AG04449 (cell line): ENCODE measurements at regions of chr15 and their contacts with region 1.

Region 1: DNA sequence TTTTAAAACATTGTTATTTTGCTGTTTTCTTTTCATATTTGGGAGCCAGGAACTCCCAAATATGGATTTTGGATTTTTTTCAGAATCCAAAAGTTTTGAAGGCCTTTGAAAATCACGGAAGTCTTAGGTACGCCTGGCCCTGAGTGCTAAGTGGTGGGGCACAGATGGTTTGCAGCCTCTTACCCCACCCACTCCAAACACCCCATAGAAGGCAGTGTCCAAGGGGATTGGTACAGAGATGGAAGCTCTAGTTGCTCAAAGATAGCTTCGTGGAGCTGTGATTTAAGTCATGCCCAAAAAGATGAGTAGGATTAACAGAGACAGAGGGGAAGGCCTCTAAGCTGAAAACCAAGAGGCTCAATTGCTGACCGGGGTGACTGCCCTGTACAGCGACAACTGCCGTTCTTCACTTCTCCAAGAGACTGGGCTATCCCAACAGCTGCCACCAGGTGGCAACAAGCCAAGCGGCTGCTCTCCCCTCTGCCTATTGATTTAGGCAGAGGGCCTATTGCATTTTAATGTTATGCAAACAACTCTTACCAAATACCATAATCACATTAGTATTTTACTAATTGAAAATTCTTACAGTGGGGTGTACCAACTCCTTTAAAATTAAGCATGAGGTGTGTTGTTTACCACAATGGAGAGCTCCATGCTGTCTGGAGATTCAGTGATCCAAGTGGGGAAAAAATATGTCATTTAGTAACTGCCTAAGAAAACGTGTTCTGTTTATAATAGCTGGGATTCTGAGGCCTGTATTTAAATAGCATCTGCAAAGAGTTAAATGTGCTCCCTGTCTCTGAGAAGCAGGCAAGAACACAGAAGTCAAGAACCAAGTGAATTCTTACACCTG is 64.0 kb upstream of the C15orf61 start:
- DNase-seq: no peak
- H3K4me3 ChIP-seq: no peak overlapping the region
- CTCF ChIP-seq: peak; percentile 83

Region 2: DNA sequence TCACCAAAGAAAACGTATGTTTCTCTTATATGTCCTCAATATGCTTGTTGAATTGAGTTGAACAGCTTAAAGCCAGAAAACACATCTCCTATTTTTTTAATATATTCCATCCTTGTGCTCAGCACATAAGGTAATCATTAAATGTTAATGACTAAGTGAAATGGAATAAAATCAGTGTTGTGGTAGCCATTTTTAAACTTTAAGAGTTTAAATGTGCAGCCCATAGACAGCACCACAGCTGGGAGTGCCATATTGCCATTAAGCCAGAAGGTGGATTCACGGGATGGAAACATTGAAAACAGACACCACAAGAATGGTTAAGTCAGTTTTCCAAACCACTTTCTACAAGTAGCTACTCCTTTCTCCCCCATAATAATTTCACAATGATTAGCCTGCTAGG is 12.8 kb before region 1 on chr15:
- CTCF ChIA-PET with region 1: interaction called, 74 read pairs
- POLR2A ChIA-PET with region 1: no interaction called
- DNase-seq: no peak
- H3K4me3 ChIP-seq: no peak overlapping the region
- CTCF ChIP-seq: no peak

Region 3: DNA sequence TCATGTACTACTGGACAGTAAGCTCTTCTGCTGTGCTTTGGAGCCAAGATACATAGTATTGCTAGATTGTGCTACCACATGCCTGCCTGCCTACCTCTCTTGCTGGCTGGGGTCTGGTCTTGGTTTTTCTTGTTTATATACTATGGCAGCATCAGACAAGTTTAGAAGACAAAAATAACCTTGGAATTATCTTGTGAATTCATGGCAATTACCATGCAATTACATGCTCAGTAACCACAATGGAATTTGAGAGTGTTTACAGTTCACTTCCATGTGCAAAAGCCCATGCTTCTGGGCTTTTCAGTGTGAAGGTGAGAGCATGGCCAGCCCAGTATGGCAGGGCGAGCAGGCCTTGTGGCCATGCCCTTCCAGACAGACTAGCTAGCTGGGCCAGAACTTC is 16.1 kb after region 1 on chr15:
- CTCF ChIA-PET with region 1: interaction called, 103 read pairs
- POLR2A ChIA-PET with region 1: no interaction called
- DNase-seq: no peak
- H3K4me3 ChIP-seq: no peak overlapping the region
- CTCF ChIP-seq: no peak

Region 4: DNA sequence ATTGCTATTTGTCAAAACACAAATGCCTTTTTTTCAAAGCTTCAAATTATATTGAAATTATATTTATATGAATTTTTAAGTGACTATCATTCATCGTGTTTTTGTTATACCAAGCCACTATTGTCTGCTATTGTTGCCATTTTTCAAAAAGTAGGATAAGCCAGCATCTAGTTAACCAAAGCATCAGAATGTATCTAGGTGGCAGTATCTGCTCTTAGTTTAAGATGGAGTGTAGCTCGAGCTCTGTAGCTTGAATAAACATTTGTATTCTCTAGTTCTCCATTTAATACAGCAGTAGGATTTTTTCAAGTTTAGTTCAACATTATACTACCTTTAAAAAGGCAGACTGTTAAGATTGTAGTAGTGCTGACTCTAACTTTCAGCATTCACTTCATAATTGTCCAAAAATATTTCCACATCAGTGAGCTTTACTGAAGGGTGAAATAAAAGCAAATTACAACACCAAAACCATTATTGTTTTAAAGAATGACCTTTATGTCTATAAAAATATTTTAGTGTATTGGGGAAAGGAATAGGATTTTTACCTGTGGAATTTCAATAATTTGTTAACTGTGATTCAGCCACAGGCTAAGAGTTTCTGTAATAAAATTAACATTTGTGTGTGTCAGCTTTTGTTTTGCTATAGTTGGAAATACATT is 44.4 kb after region 1 on chr15:
- CTCF ChIA-PET with region 1: interaction called, 10 read pairs
- POLR2A ChIA-PET with region 1: no interaction called
- DNase-seq: no peak
- H3K4me3 ChIP-seq: no peak overlapping the region
- CTCF ChIP-seq: peak; percentile 43

Region 5: DNA sequence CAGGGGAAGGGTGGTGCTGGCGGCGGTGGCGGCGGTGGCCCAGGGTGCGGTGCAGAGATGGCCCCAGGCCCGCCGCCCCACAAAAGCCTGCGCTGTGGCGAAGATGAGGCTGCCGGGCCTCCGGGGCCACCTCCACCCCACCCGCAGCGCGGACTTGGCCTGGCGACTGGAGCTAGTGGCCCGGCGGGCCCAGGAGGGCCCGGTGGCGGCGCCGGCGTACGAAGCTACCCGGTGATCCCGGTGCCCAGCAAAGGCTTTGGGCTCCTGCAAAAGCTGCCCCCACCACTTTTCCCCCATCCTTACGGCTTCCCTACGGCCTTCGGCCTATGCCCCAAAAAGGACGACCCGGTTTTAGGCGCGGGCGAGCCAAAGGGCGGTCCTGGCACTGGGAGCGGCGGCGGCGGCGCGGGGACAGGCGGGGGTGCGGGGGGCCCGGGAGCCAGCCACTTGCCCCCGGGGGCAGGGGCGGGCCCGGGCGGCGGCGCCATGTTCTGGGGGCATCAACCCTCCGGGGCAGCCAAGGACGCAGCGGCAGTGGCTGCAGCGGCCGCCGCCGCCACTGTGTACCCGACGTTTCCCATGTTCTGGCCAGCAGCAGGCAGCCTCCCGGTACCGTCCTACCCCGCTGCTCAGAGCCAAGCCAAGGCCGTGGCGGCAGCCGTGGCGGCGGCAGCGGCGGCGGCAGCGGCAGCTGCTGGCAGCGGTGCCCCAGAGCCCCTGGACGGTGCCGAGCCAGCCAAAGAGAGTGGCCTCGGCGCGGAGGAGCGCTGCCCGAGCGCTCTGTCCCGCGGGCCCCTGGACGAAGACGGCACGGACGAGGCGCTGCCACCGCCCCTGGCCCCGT is 370.0 kb after region 1 on chr15:
- CTCF ChIA-PET with region 1: interaction called, 30 read pairs
- POLR2A ChIA-PET with region 1: no interaction called
- DNase-seq: no peak
- H3K4me3 ChIP-seq: no peak overlapping the region
- CTCF ChIP-seq: no peak

Region 6: DNA sequence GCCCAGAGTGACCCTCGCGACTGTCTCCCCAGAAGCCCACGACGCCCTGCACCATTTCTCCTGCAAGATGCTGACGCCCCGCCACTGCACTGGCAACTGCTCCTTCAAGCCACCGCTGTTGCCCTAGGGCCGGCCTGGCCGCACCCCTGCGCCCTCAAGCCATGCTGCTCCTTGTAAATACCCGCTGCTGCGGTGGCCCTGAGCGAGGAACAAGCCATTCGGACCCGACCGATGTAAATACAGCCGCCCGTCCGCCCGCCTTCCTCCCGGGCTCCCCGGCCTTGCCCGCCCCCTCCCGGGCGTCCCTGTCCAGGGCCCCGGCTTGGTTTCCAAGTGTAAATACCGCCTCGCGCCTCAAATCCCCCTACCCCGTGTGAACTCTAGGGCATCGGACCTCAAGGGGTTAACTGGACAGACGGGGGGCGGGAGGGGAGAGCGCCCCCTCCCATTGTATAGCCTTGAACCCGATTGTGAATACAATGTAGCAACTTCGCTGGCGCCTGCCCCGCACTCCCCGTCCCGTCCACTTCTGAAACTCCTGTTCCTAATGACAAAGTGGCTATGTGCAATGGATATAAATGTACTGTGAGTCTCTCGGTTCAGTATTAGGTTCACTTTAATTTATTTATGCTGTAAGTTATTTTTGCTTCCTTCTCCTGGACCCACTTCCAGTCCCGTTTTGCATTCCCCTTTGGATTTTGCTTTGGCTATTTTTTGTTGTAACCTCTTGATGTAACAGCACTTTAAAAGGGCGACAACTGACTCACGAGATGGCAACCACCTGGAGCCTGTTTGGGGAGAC is 377.0 kb after region 1 on chr15:
- CTCF ChIA-PET with region 1: interaction called, 149 read pairs
- POLR2A ChIA-PET with region 1: no interaction called
- DNase-seq: no peak
- H3K4me3 ChIP-seq: peak overlapping the region; percentile 36
- CTCF ChIP-seq: peak; percentile 59

Region 7: DNA sequence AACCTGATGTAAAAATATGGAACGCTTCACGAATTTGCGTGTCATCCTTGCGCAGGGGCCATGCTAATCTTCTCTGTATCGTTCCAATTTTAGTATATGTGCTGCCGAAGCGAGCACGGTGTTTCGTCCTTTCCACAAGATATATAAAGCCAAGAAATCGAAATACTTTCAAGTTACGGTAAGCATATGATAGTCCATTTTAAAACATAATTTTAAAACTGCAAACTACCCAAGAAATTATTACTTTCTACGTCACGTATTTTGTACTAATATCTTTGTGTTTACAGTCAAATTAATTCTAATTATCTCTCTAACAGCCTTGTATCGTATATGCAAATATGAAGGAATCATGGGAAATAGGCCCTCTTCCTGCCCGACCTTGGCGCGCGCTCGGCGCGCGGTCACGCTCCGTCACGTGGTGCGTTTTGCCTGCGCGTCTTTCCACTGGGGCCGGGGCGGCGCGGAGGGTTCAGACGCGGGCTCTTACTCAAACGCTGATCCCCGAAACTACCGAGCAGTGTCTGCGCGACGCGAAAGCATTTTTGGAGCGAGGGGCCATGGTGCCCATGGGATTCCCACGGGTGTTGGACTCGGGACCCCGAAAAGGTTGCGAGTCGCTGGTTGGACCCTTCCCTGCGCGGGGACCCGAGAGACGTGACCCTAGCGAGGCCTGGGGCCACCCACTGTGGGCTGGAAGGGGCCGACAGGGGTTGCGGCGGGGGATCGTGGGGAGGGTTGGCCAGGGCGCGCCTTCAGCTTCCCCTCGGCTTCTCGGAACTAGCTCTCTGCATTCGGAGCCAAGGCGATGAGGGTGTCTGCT is 383.2 kb after region 1 on chr15 and contains the start of gene RNU6-1:
- CTCF ChIA-PET with region 1: interaction called, 149 read pairs
- POLR2A ChIA-PET with region 1: no interaction called
- DNase-seq: peak; percentile 52
- H3K4me3 ChIP-seq: peak within 1 kb of the TSS; percentile 96
- CTCF ChIP-seq: no peak